Naive thymus-derived CD4-positive, alpha-beta T cell (primary cell): ENCODE measurements at regions of chr2 and their contacts with region 1.

Region 1: DNA sequence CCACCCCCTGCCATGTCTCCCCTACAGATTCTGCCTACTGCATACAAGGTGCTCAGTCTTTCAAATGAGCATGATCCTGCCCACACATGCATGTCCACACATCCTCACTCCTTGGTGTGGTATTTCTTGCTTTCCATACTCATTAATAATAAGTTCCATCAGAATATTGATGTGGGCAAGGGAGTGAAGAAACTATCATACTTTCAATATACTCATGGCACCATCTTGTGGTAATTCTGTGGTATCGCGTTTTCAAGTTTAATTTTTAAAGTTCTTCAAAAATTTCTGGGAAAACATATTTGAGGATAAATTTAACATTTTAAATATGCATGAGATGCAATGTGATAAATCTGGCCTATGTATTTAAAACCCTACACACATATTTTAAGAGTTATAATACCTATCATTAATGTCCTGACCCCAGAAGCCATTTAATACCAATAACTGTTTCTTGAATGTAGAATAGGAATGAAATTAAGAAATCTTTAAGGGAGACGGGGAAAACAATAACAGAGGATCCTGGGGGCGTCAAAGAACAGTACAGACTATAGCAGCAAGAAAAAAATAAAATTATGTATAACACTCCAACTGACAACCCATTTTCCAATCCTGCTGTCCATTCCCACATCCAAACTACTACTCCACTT is 110.1 kb downstream of the ZNF385B start:
- DNase-seq: no peak
- ATAC-seq: no peak
- H3K4me3 ChIP-seq: no peak overlapping the region
- H3K4me3 Mint-ChIP-seq: no peak overlapping the region
- H3K27ac ChIP-seq: no peak overlapping the region
- H3K27ac Mint-ChIP-seq: no peak overlapping the region
- H3K4me1 ChIP-seq: no peaks in the 10 kb centered on the region
- H3K4me1 Mint-ChIP-seq: no peaks in the 10 kb centered on the region
- H3K27me3 ChIP-seq: no peaks in the 10 kb centered on the region
- H3K27me3 Mint-ChIP-seq: peaks cover 0 to 5% (median 0%) of the 10 kb centered on the region in 5 donors

Region 2: GRCh38 chr2:178397002-178397605 is 1354.2 kb before region 1 on chr2:
- CTCF ChIA-PET with region 1: no interaction called
- POLR2A ChIA-PET with region 1: no interaction called
- intact Hi-C with region 1: loop called in 1 of 2 experiments (anchors 5 kb)
- DNase-seq: peak in 6 of 9 donors; percentile 5 to 44 (median 30)
- ATAC-seq: peak; percentile 75
- H3K4me3 ChIP-seq: no peak overlapping the region
- H3K4me3 Mint-ChIP-seq: no peak overlapping the region
- H3K27ac ChIP-seq: no peak overlapping the region
- H3K27ac Mint-ChIP-seq: no peak overlapping the region
- H3K4me1 ChIP-seq: no peaks in the 10 kb centered on the region
- H3K4me1 Mint-ChIP-seq: peaks cover 0 to 6% (median 0%) of the 10 kb centered on the region in 7 donors
- H3K27me3 ChIP-seq: no peaks in the 10 kb centered on the region
- H3K27me3 Mint-ChIP-seq: peaks cover 0 to 32% (median 5%) of the 10 kb centered on the region in 5 donors

Region 3: GRCh38 chr2:178761759-178762371 is 989.4 kb before region 1 on chr2:
- CTCF ChIA-PET with region 1: no interaction called
- POLR2A ChIA-PET with region 1: no interaction called
- intact Hi-C with region 1: loop called in 1 of 2 experiments (anchors 2 kb)
- DNase-seq: peak in 6 of 9 donors; percentile 13 to 47 (median 38)
- ATAC-seq: peak; percentile 52
- H3K4me3 ChIP-seq: no peak overlapping the region
- H3K4me3 Mint-ChIP-seq: no peak overlapping the region
- H3K27ac ChIP-seq: no peak overlapping the region
- H3K27ac Mint-ChIP-seq: no peak overlapping the region
- H3K4me1 ChIP-seq: no peaks in the 10 kb centered on the region
- H3K4me1 Mint-ChIP-seq: peaks cover 0 to 2% (median 0%) of the 10 kb centered on the region in 7 donors
- H3K27me3 ChIP-seq: no peaks in the 10 kb centered on the region
- H3K27me3 Mint-ChIP-seq: no peaks in the 10 kb centered on the region

Region 4: GRCh38 chr2:179422037-179422643 is 329.1 kb before region 1 on chr2:
- CTCF ChIA-PET with region 1: no interaction called
- POLR2A ChIA-PET with region 1: no interaction called
- intact Hi-C with region 1: loop called (anchors 1 kb)
- DNase-seq: peak in 3 of 9 donors; percentile 2 to 37 (median 3)
- ATAC-seq: peak; percentile 57
- H3K4me3 ChIP-seq: no peak overlapping the region
- H3K4me3 Mint-ChIP-seq: no peak overlapping the region
- H3K27ac ChIP-seq: no peak overlapping the region
- H3K27ac Mint-ChIP-seq: no peak overlapping the region
- H3K4me1 ChIP-seq: no peaks in the 10 kb centered on the region
- H3K4me1 Mint-ChIP-seq: peaks cover 0 to 2% (median 0%) of the 10 kb centered on the region in 7 donors
- H3K27me3 ChIP-seq: no peaks in the 10 kb centered on the region
- H3K27me3 Mint-ChIP-seq: peaks cover 8 to 36% (median 16%) of the 10 kb centered on the region in 5 donors